ENCODE measurements at regions of chr2 and their contacts with region 1.

Region 1: DNA sequence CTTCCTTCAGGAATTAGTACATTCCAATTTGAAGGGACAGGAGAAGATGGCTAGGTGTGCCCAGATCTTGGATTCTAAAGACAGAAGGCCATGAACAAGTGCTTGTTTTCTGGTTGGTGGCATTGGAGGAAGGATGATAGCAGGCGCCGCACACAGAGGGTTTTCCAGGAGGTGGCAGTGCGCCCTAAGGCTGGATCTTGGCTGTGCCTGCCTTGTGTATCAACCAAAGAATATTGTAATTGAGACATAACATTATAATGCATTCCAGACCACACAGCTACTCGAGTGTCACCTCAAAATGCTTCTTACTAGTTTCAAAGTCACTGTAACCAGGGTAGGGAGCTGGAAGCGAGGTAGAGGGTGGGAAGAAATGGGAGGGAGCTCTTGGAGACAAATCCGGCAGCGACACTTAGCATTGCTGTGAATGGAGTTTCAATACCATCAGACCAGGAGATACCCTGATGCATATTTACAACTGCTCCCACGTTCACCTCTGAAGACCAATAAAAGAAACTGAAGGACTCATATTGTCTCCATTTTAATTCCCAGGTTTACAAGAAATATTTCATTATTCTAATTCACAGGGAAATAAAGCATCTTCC is 42.5 kb downstream of the CPO start:
- DNase-seq: peak; percentile 76
- ATAC-seq: peak; percentile 87
- H3K4me3 ChIP-seq: no peak overlapping the region
- H3K27ac ChIP-seq: no peak overlapping the region
- H3K4me1 ChIP-seq: peaks cover 9% of the 10 kb centered on the region
- H3K27me3 ChIP-seq: peaks cover 3% of the 10 kb centered on the region
- CTCF ChIP-seq: peak; percentile 97
- POLR2A ChIP-seq: peak; percentile 48; the same call in 1 of the 2 replicates
- RAD21 ChIP-seq: peak; percentile 99

Region 2: DNA sequence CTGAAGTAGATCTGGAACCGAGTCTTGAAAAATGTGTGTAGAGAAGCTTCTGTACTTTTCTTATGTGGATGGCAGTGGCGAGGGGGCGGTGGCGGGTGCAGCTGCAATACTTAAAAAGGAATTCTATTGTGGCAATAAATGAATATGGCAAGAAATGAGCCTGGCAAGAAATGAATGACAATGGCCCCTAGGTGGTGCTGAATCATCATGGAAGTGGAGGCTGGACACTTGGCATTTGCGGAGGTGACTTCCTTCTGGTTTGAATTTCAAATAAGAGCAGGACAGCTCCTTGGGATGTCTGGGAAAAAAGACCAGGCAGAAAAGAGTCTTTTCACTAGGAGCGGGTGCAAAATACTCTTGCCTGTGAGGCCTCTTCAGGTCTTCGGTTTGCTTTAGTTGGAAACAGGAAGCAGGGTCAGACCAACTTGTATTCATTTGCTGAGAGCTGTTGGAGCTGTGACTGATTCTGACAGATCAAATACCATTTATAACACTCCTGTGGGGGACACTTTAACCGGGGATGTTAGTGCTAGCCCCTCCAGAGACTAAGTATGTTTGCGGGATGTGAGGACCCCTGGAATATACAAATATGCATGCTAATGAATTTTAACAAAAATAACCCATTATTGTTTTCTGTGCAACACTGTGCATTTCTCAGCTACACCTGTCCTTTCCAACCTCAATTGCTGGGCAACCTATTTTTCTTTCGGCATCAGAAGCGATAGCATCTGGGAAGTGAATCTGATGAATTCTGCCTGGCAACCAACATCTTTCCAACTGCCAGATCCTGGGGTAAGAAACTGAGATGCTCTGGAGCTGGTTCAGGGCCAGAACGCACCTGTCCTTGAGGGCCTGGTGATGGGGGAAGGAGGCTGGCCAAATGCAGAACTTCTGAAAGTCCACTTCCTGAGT is 181.1 kb before region 1 on chr2:
- CTCF ChIA-PET with region 1: interaction called, 6 read pairs
- POLR2A ChIA-PET with region 1: no interaction called
- dilution Hi-C with region 1: no loop called
- in situ Hi-C with region 1: no loop called
- intact Hi-C with region 1: loop called (anchors 2 kb)
- DNase-seq: peak; percentile 76
- ATAC-seq: peak; percentile 82
- H3K4me3 ChIP-seq: no peak overlapping the region
- H3K27ac ChIP-seq: no peak overlapping the region
- H3K4me1 ChIP-seq: no peaks in the 10 kb centered on the region
- H3K27me3 ChIP-seq: no peaks in the 10 kb centered on the region
- CTCF ChIP-seq: peak; percentile 76
- POLR2A ChIP-seq: no peak
- RAD21 ChIP-seq: peak; percentile 90

Region 3: DNA sequence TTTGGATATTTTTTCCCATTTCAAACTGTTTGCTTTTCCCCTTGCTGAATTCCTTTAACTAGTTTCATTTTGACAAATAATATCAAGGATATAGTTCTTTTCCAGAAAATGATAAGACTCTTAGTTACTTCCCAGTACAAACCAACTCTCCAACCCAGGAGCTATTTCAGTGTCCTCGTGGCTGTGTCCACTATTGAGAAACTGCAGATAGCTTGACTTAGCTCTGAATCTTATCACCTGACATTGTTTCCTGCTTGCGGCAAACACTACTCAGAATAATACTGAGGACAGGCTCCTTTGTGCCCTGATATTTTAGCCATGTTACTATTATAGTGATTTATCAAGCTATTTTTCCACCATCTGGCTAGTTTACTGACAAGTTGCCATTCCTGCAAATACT is 109.3 kb after region 1 on chr2:
- CTCF ChIA-PET with region 1: no interaction called
- POLR2A ChIA-PET with region 1: no interaction called
- dilution Hi-C with region 1: no loop called
- in situ Hi-C with region 1: no loop called
- intact Hi-C with region 1: no loop called
- DNase-seq: no peak
- ATAC-seq: no peak
- H3K4me3 ChIP-seq: no peak overlapping the region
- H3K27ac ChIP-seq: no peak overlapping the region
- H3K4me1 ChIP-seq: no peaks in the 10 kb centered on the region; the same call in 1 of the 2 replicates
- H3K27me3 ChIP-seq: no peaks in the 10 kb centered on the region
- CTCF ChIP-seq: no peak
- POLR2A ChIP-seq: no peak
- RAD21 ChIP-seq: no peak

Region 4: GRCh38 chr2:207258263-207258991 is 276.6 kb after region 1 on chr2:
- CTCF ChIA-PET with region 1: interaction called, 4 read pairs
- POLR2A ChIA-PET with region 1: no interaction called
- dilution Hi-C with region 1: no loop called
- in situ Hi-C with region 1: no loop called
- intact Hi-C with region 1: loop called (anchors 1 kb)
- DNase-seq: peak; percentile 100
- ATAC-seq: peak; percentile 76
- H3K4me3 ChIP-seq: no peak overlapping the region
- H3K27ac ChIP-seq: peak overlapping the region; percentile 99
- H3K4me1 ChIP-seq: peaks cover 56% of the 10 kb centered on the region
- H3K27me3 ChIP-seq: no peaks in the 10 kb centered on the region
- CTCF ChIP-seq: peak; percentile 14; the same call in 1 of the 2 replicates
- POLR2A ChIP-seq: peak; percentile 40
- RAD21 ChIP-seq: peak; percentile 45

Region 5: GRCh38 chr2:207334624-207335371 is 353.0 kb after region 1 on chr2:
- CTCF ChIA-PET with region 1: interaction called, 3 read pairs
- POLR2A ChIA-PET with region 1: no interaction called
- dilution Hi-C with region 1: no loop called
- in situ Hi-C with region 1: no loop called
- intact Hi-C with region 1: loop called (anchors 5 kb)
- DNase-seq: peak; percentile 100
- ATAC-seq: peak; percentile 79
- H3K4me3 ChIP-seq: peak overlapping the region; percentile 24
- H3K27ac ChIP-seq: peak overlapping the region; percentile 67
- H3K4me1 ChIP-seq: peaks cover 14% of the 10 kb centered on the region
- H3K27me3 ChIP-seq: no peaks in the 10 kb centered on the region
- CTCF ChIP-seq: no peak
- POLR2A ChIP-seq: peak; percentile 86
- RAD21 ChIP-seq: no peak; the same call in none of the 2 replicates

Region 6: GRCh38 chr2:207625018-207625907 is 643.4 kb after region 1 on chr2 and contains the start of gene METTL21A:
- CTCF ChIA-PET with region 1: no interaction called
- POLR2A ChIA-PET with region 1: no interaction called
- dilution Hi-C with region 1: no loop called
- in situ Hi-C with region 1: no loop called
- intact Hi-C with region 1: loop called (anchors 2 kb)
- DNase-seq: peak; percentile 86
- ATAC-seq: peak; percentile 92
- H3K4me3 ChIP-seq: peak within 1 kb of the TSS; percentile 88
- H3K27ac ChIP-seq: peak within 1 kb of the TSS; percentile 98
- H3K4me1 ChIP-seq: peaks cover 6% of the 10 kb centered on the region; the same call in 1 of the 2 replicates
- H3K27me3 ChIP-seq: no peaks in the 10 kb centered on the region
- CTCF ChIP-seq: peak; percentile 43
- POLR2A ChIP-seq: peak; percentile 89
- RAD21 ChIP-seq: no peak; the same call in 1 of the 2 replicates
- total RNA-seq, gene METTL21A: 5.9 and 11.4 TPM in 2 replicates

Region 7: DNA sequence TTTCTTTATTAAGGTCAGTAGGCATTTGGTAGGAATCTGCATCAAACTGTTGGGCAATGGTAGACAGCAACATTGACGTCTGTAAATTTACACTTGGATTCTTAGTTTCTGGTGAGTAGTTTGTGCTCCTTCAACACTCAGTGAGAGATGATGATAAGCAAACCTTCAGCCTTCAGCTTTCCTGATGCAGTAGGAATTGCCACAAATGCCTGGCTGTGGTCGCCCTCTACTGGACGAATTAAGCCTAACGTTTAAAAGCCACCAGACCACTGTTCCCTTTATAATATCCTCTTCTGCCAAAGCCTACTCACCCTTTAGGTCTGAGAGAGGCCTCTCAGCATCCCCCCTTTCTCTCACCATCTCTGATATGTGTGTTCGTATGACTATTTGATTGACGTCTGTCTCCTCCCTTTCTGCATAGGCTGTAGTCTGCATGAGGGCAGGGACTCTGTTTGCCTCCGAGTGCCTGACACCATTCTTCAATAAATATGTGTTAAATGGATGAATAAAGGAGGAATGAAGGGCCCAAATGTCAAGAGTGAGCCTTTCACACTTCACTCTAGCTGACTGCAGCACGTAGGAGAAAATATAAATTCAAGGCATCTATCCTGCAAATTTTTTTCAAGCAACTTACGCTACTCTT is 1090.5 kb after region 1 on chr2:
- CTCF ChIA-PET with region 1: no interaction called
- POLR2A ChIA-PET with region 1: no interaction called
- dilution Hi-C with region 1: no loop called
- in situ Hi-C with region 1: no loop called
- intact Hi-C with region 1: loop called (anchors 10 kb)
- DNase-seq: peak; percentile 72
- ATAC-seq: peak; percentile 93
- H3K4me3 ChIP-seq: no peak overlapping the region
- H3K27ac ChIP-seq: no peak overlapping the region
- H3K4me1 ChIP-seq: no peaks in the 10 kb centered on the region
- H3K27me3 ChIP-seq: peaks cover 5% of the 10 kb centered on the region
- CTCF ChIP-seq: peak; percentile 85
- POLR2A ChIP-seq: 0 out of 2 replicates have a peak, but pooled peaks have one; percentile 42
- RAD21 ChIP-seq: peak; percentile 98